Heart right ventricle (tissue), 16 donors: ENCODE measurements at regions of chr16 and their contacts with region 1.

Region 1: DNA sequence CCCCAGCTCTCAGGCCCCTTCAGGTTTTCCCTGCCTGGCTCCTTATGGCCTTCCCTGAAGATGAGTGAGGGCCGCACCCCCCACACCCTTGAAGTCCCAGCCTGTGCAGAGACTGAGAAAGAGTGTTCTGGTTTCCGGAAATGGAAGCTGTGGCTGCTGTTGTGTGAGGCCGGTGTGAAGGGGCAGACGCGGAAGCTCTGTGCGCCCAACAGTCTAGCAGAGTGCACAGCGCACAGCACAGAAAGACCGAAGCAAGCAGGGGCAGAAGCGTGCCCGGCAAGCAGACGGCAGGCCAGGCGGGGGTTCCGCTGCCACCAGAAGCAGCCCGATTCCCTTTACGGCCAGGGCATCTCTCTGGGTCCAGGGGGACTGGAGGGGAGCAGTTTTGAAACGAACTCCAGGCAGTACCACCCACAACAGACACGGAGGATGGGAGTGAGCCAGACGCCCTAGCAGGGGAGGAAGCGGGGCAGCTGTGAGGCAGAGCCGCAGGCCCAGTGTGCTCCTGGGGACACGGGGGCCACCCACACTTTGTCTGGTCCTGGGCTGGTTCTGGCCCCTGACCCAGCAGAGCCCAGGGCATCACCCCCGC is 16.7 kb downstream of the TPSG1 start:
- DNase-seq: no peak
- ATAC-seq: no peak
- H3K4me3 ChIP-seq: no peak overlapping the region
- H3K27ac ChIP-seq: no peak overlapping the region
- H3K4me1 ChIP-seq: no peaks in the 10 kb centered on the region
- H3K27me3 ChIP-seq: peaks cover 0 to 6% (median 0%) of the 10 kb centered on the region in 7 donors
- CTCF ChIP-seq: no peak

Region 2: GRCh38 chr16:807347-808084 is 400.8 kb before region 1 on chr16:
- intact Hi-C with region 1: loop called in 1 of 10 experiments (anchors 10 kb)
- DNase-seq: peak; percentile 92 to 94
- ATAC-seq: peak; percentile 96 to 99 (median 99)
- H3K4me3 ChIP-seq: peak overlapping the region; percentile 66 to 99 (median 84)
- H3K27ac ChIP-seq: peak overlapping the region; percentile 41 to 99 (median 92)
- H3K4me1 ChIP-seq: peaks cover 0 to 25% (median 19%) of the 10 kb centered on the region in 9 donors
- H3K27me3 ChIP-seq: peaks cover 0 to 21% (median 18%) of the 10 kb centered on the region in 7 donors
- CTCF ChIP-seq: no peak